ENCODE measurements at regions of chr1 and their contacts with region 1.

Region 1: DNA sequence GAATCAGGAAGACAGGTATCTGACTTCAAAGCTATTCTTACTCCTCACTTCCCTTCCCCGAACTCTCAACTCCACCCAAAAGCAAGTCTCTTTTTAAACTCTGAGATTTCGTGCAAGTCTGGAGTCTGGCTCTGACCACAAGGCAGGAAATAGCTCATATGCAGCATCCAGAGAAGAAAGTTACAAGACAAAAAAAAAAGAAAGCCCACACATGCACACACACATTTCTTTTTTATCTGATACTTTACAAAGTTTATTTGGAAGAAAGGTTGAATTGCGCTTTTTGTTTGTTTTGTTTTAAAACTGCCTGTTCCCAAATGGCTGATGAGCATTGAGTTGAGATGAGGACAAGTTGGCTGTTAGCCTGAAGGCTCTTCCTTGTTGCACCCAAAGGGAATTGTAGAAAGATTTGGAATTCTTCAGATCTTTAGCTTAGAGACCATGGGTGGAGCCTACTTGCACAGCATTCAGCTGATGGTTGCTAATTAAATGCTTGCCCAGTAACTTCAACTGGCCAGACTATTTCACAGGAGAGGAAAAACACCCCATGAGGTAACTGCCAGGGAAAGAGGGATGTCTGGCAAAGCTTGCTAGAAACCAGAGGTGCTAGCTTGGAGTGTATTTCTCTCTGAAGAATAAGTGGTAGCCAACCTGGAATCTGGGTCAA is 490.3 kb downstream of the TTLL7 start:
- DNase-seq: peak; percentile 61
- H3K4me3 Mint-ChIP-seq: peak overlapping the region; percentile 55
- H3K27ac Mint-ChIP-seq: peak overlapping the region; percentile 89
- H3K4me1 Mint-ChIP-seq: peaks cover 39% of the 10 kb centered on the region
- H3K27me3 Mint-ChIP-seq: no peaks in the 10 kb centered on the region

Region 2: DNA sequence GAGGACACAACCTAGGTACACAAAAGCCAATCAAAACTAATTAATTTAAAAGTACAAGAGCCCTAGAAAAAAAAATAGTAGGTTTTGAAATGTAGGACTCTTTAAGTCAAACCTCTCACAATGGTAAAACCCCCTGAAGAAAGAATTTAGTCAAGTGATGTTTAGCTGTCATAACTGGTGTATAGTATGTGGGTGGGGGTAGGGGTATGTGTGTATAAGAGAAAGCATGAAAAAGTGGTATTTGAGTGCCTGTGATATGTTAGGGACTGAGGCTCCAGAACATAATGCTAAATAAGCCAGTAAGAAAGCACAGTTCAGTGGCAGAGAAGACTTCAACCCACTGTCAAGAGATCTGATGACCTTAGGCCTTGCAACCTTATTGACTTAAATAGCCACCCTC is 17.6 kb before region 1 on chr1:
- intact Hi-C with region 1: loop called (anchors 2 kb)
- DNase-seq: no peak
- H3K4me3 Mint-ChIP-seq: no peak overlapping the region
- H3K27ac Mint-ChIP-seq: no peak overlapping the region
- H3K4me1 Mint-ChIP-seq: peaks cover 45% of the 10 kb centered on the region
- H3K27me3 Mint-ChIP-seq: no peaks in the 10 kb centered on the region